ENCODE measurements at regions of chr5 and their contacts with region 1.

Region 1: DNA sequence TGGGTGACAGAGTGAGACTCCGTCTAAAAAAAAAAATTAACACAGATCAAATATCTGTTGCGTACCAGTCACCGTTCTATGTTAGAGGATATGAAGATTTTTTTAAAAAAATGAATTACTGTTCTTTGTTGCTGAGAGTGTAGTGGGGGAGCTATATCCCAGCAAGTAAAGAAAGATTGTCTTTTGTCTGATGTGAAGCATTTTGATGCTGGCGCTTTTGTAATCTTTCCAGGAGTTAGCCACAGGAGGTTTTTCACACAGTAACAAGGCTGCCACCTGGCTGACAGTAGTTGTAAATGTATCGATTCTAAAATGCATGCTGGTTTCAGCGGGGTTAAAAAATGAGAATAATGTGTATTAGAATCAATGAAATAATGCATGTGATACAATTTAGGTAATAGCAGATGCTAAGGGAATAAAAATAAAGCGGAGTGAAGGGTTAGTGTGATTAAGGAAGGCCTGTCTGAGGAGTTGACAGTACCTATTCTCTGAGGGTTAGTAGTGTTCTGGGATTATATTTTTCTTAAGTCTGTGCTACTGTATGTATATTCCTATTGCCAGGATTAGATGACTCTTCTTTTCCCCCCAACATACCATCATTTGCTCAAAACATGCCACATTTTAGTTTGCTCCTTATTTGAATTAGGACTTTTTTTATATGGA is 3.4 kb downstream of the LMNB1 start:
- DNase-seq: peak; percentile 44 to 61 (median 52)
- ATAC-seq: no peak
- H3K4me3 ChIP-seq: no peak overlapping the region
- H3K27ac ChIP-seq: no peak overlapping the region
- H3K4me1 ChIP-seq: peaks cover 13% of the 10 kb centered on the region
- H3K27me3 ChIP-seq: no peaks in the 10 kb centered on the region
- CTCF ChIP-seq: peak; percentile 26 to 78 (median 67)
- POLR2A ChIP-seq: no peak

Region 2: GRCh38 chr5:126414874-126415502 is 365.3 kb before region 1 on chr5:
- intact Hi-C with region 1: no loop called
- DNase-seq: peak in 3 of 4 donors; percentile 17 to 48 (median 40)
- ATAC-seq: peak; percentile 50
- H3K4me3 ChIP-seq: no peak overlapping the region
- H3K27ac ChIP-seq: peak overlapping the region in 1 of 4 donors; percentile 24
- H3K4me1 ChIP-seq: peaks cover 7% of the 10 kb centered on the region
- H3K27me3 ChIP-seq: no peaks in the 10 kb centered on the region
- CTCF ChIP-seq: no peak
- POLR2A ChIP-seq: no peak

Region 3: DNA sequence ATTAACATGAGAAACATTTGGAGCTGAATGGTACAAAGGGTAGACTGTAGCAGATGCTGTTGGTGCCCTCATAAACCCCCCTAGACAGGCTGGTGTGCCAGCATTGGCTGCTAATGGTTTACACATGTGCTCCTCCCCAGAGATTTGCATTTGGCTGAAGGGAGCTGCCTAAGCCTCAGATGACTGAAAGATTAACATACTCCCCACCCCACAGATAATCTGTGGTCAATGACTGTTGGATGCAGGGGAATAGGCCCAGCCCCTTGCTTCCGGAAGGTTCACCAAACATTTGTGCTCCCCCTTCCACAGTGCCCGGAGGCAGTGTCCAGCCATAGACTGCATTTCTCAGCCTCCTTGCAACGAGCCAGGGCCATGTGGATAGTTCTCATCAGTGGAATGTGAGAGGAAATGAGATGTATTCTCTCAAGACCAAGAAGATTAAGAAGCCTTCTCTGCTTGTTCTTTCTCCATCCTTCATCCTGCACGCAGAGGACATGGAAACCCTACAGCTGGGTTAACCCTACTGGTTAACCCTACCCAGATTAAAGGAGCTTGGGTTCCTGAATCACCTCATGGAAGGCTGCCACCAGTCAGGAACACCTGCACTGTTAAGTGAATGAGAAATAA is 100.0 kb before region 1 on chr5:
- intact Hi-C with region 1: loop called (anchors 5 kb)
- DNase-seq: no peak
- ATAC-seq: no peak
- H3K4me3 ChIP-seq: no peak overlapping the region
- H3K27ac ChIP-seq: no peak overlapping the region
- H3K4me1 ChIP-seq: no peaks in the 10 kb centered on the region
- H3K27me3 ChIP-seq: no peaks in the 10 kb centered on the region
- CTCF ChIP-seq: no peak
- POLR2A ChIP-seq: no peak

Region 4: DNA sequence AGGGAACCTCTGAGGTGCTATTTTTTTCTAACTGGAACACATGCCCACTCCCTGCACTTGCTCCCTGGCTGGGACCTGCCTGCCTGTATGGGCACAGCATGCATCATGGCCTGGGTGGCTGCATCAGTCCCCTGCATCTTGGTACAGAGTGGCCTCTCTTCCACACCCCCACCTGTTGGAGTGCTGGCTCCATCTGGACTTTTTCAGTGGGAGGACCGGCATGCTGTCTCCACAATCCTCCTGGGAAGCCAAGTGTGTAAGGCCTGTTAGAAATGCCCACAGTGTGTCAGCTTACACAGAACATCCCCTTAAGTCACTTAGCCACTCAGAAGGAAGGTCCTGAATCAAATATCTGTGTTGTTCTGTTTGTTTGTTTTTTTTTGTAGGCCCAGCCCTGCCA is 147.1 kb after region 1 on chr5:
- intact Hi-C with region 1: no loop called
- DNase-seq: no peak
- ATAC-seq: no peak
- H3K4me3 ChIP-seq: no peak overlapping the region
- H3K27ac ChIP-seq: no peak overlapping the region
- H3K4me1 ChIP-seq: peaks cover 4% of the 10 kb centered on the region
- H3K27me3 ChIP-seq: no peaks in the 10 kb centered on the region
- CTCF ChIP-seq: no peak
- POLR2A ChIP-seq: no peak

Region 5: GRCh38 chr5:126984632-126985031 is 204.3 kb after region 1 on chr5:
- intact Hi-C with region 1: no loop called
- DNase-seq: no peak
- ATAC-seq: no peak
- H3K4me3 ChIP-seq: no peak overlapping the region
- H3K27ac ChIP-seq: no peak overlapping the region
- H3K4me1 ChIP-seq: no peaks in the 10 kb centered on the region
- H3K27me3 ChIP-seq: no peaks in the 10 kb centered on the region
- CTCF ChIP-seq: no peak
- POLR2A ChIP-seq: no peak

Region 6: DNA sequence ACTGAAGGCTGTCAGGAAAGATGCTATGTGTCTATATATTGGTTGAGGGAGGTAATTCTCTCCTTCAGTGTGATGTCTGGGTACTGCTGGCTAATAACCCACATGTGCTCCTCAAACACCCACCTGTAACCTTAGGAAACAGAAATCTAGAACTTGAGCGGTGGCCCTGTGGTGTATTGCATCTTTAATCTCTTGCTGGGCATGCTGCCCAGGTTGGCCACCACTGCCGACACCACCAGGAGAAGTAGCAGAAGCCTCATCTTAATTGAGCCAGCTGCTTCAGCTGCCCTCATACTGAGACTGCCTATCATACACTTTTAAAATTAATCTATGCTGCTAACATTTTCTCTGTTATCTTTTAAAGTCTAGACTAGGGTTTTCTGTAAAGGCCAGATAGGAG is 396.5 kb after region 1 on chr5:
- intact Hi-C with region 1: no loop called
- DNase-seq: no peak
- ATAC-seq: no peak
- H3K4me3 ChIP-seq: no peak overlapping the region
- H3K27ac ChIP-seq: no peak overlapping the region
- H3K4me1 ChIP-seq: no peaks in the 10 kb centered on the region
- H3K27me3 ChIP-seq: no peaks in the 10 kb centered on the region
- CTCF ChIP-seq: no peak
- POLR2A ChIP-seq: no peak

Measured in body of pancreas (tissue), 4 donors.